CD8-positive, alpha-beta T cell (primary cell): ENCODE measurements at regions of chr11 and their contacts with region 1.

Region 1: DNA sequence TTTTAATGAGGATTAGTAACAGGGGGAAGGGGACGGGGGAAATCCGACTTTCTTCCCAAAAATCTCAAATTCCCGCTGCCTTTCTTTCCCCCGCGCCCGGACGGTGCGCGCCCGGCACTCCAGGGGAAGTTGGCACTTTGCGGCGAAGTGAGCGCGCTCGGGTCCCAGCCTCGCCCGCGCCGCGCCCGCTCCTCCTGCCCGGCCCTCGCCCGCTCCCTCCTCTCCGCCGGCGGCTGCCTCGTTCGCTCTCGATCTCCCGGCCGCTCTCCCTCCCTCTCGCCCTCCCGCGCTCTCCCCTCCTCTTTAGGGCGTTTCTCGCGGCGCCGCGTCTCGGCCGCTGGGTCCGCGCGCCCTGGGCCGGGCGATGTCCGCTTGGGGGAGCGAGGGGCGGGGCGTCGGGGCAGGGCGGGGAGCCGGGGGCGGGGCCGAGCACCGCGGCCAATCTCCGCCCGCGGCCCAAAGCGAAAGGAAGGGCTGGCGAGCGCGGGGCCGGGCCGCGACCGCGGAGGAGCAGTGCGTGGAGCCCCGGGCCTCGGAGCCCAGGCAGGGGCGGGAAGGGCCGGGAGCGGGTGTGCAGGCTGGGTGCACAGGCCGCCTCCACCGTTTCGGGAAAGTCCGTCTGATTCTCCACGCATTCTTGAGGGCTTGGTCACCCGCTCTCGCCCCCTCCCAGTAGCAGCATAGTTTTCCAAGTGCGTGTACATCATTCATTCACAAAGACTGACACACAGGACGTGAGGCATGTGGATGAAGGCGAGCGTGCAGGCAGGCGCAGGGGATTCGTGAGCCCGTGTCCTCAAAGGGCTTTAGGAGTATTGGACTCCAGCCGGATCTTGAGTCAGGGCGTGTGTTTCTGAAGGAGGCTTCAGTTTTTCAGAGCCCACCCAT is 65.1 kb downstream of the ETS1 start:
- DNase-seq: peak; percentile 80 to 96 (median 91)
- ATAC-seq: peak; percentile 62
- H3K4me3 ChIP-seq: peak overlapping the region; percentile 94 to 97
- H3K4me3 Mint-ChIP-seq: peak overlapping the region; percentile 98
- H3K27ac ChIP-seq: peak overlapping the region; percentile 86 to 91
- H3K27ac Mint-ChIP-seq: peak overlapping the region; percentile 98
- H3K4me1 ChIP-seq: peaks cover 44% of the 10 kb centered on the region
- H3K4me1 Mint-ChIP-seq: peaks cover 50% of the 10 kb centered on the region
- H3K27me3 ChIP-seq: no peaks in the 10 kb centered on the region
- H3K27me3 Mint-ChIP-seq: no peaks in the 10 kb centered on the region
- CTCF ChIP-seq: no peak

Region 2: DNA sequence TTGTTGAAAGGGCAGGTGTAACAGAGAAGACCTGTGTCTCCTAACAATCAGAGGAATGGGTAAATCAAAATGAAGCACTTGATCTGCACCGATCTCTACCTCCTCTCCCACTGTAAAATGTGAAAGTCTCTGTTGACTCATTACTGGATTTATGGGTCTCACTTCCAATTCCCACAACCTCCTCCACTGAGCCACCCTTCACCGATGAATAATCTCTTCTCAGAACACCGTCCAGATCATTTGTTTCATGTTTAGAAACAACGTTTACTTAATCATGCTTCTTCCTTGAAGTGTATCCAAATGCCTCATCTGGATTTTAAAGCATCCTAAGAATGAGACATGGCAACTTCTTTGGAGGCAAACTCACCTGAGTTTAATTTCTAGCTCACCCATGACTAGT is 578.5 kb before region 1 on chr11:
- CTCF ChIA-PET with region 1: no interaction called
- POLR2A ChIA-PET with region 1: no interaction called
- intact Hi-C with region 1: no loop called
- DNase-seq: no peak
- ATAC-seq: no peak
- H3K4me3 ChIP-seq: no peak overlapping the region
- H3K4me3 Mint-ChIP-seq: no peak overlapping the region
- H3K27ac ChIP-seq: no peak overlapping the region
- H3K27ac Mint-ChIP-seq: no peak overlapping the region
- H3K4me1 ChIP-seq: no peaks in the 10 kb centered on the region
- H3K4me1 Mint-ChIP-seq: no peaks in the 10 kb centered on the region
- H3K27me3 ChIP-seq: no peaks in the 10 kb centered on the region
- H3K27me3 Mint-ChIP-seq: peaks cover 8% of the 10 kb centered on the region
- CTCF ChIP-seq: no peak

Region 3: DNA sequence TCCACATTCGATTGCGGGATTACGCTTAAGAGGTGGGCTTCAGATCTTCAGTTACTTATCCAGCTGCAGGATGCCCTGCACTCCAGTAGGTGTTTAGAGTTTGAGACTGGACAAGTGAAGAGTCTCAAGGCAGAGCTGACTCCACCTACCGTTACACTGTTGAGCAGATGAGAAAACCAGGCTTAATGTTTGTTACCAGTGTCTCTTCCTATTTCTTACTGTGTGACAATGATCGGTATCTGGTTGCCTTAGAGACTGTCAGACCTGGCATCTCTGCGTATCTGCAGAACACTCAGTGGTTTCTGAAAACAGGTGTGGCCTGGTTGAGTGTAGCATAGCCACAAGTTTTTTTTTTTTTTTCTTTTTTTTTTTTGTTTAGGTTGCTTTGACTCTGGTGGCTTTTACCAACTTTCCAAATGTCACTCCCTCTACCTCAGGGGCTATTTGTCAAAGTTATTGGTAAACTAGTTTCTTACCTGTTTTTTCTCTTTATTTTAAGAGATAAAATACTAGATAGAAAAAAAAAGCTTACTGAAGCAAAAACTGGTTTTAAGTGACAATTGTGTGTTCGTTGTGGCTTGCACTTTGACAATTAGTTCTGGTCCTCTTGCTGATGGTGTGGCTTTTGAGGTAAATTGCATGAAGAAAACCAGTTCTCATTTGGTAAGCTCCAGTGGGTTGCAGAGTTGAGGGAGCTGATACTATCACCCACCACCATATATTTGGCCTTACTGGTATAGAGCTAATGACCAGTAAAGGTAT is 219.7 kb before region 1 on chr11:
- CTCF ChIA-PET with region 1: interaction called, 11 read pairs
- POLR2A ChIA-PET with region 1: interaction called, 71 read pairs
- intact Hi-C with region 1: loop called in 1 of 2 experiments (anchors 1 kb)
- DNase-seq: peak; percentile 49 to 97 (median 72)
- ATAC-seq: peak; percentile 85
- H3K4me3 ChIP-seq: peak overlapping the region; percentile 46 to 51
- H3K4me3 Mint-ChIP-seq: peak overlapping the region; percentile 88
- H3K27ac ChIP-seq: peak overlapping the region; percentile 87 to 89
- H3K27ac Mint-ChIP-seq: peak overlapping the region; percentile 99
- H3K4me1 ChIP-seq: peaks cover 88% of the 10 kb centered on the region
- H3K4me1 Mint-ChIP-seq: peaks cover 92% of the 10 kb centered on the region
- H3K27me3 ChIP-seq: no peaks in the 10 kb centered on the region
- H3K27me3 Mint-ChIP-seq: no peaks in the 10 kb centered on the region
- CTCF ChIP-seq: no peak

Region 4: DNA sequence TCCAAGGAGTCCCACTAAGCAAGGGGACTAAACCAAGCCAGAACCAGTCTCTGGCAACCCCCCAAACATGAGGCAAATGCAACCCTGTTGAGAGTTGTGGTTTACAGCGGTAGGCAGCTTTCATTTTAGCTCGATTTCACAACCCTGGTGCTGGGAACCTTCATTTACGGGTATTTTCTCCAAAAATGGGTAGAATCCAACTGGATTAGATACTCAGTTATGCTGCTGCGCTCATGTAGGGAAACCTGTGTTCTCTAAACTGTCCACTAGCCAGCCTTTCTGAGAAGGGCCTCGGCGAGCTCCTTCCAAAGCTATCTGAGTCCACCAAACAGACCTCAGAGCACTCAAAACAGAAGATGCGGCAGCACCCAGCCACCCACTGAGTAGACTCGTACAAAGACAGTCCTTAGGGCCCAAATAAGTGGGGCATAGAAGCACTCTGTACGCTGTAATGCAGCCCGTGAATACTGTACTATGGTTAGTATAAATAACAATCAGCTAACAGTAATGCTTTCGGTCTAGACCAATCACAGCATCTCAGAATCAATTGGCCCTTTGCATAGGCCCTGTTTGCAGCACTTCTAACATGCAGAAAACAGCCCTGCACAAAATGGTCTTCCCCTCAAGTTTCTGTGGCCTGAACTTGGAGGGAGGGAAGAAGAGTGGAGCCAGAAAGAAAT is 39.6 kb before region 1 on chr11:
- CTCF ChIA-PET with region 1: interaction called, 13 read pairs
- POLR2A ChIA-PET with region 1: interaction called, 185 read pairs
- intact Hi-C with region 1: loop called in 1 of 2 experiments (anchors 5 kb)
- DNase-seq: peak in 4 of 9 experiments; percentile 61 to 91 (median 82)
- ATAC-seq: peak; percentile 62
- H3K4me3 ChIP-seq: peak overlapping the region; percentile 26 to 40
- H3K4me3 Mint-ChIP-seq: peak overlapping the region; percentile 71
- H3K27ac ChIP-seq: peak overlapping the region; percentile 63 to 88
- H3K27ac Mint-ChIP-seq: peak overlapping the region; percentile 99
- H3K4me1 ChIP-seq: peaks cover 96% of the 10 kb centered on the region
- H3K4me1 Mint-ChIP-seq: peaks cover 96% of the 10 kb centered on the region
- H3K27me3 ChIP-seq: no peaks in the 10 kb centered on the region
- H3K27me3 Mint-ChIP-seq: no peaks in the 10 kb centered on the region
- CTCF ChIP-seq: no peak

Region 5: GRCh38 chr11:128544471-128545051 is 22.3 kb after region 1 on chr11:
- CTCF ChIA-PET with region 1: interaction called, 3 read pairs
- POLR2A ChIA-PET with region 1: interaction called, 9 read pairs
- intact Hi-C with region 1: loop called (anchors 1 to 2 kb)
- DNase-seq: peak in 3 of 9 experiments; percentile 26 to 51 (median 41)
- ATAC-seq: peak; percentile 68
- H3K4me3 ChIP-seq: peak overlapping the region in 1 of 2 experiments; percentile 4
- H3K4me3 Mint-ChIP-seq: peak overlapping the region; percentile 70
- H3K27ac ChIP-seq: no peak overlapping the region
- H3K27ac Mint-ChIP-seq: peak overlapping the region; percentile 87
- H3K4me1 ChIP-seq: peaks cover 50% of the 10 kb centered on the region
- H3K4me1 Mint-ChIP-seq: peaks cover 64% of the 10 kb centered on the region
- H3K27me3 ChIP-seq: no peaks in the 10 kb centered on the region
- H3K27me3 Mint-ChIP-seq: no peaks in the 10 kb centered on the region
- CTCF ChIP-seq: no peak

Region 6: DNA sequence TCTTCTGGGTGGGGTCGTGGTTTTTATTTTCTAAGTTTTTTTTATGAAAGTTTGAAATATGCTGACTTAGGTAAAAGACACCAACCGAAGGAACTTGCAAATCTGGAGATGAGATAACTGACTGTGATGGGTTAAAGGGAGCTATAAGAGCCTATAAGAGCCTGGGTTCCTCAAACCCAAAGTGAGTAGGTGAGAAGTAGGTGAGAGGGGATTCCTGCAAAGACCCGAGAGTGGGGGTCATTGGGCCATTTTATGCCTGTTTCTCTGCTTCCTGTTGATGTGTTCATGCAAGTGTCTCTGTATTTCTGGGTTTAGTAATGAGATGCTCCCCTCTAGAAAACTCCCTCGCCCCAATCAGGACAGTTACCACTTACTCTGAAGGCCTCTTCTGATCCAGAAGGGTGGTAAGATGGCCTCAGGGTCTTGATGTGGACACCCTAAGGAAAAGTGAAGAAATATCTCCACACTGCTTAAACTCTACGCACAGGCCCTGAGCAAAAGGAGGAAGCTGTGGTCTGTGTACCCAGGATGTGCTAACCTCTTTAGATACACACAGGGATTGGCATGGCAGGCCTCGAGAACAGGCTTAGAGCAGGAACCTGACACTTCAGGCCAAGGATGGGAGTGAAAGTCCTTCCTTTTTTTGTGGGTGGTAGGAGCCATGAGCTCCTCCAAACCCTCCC is 173.4 kb after region 1 on chr11:
- CTCF ChIA-PET with region 1: no interaction called
- POLR2A ChIA-PET with region 1: interaction called, 3 read pairs
- intact Hi-C with region 1: loop called in 1 of 2 experiments (anchors 5 kb)
- DNase-seq: peak in 6 of 9 experiments; percentile 29 to 78 (median 54)
- ATAC-seq: peak; percentile 47
- H3K4me3 ChIP-seq: peak overlapping the region; percentile 93 to 95
- H3K4me3 Mint-ChIP-seq: peak overlapping the region; percentile 98
- H3K27ac ChIP-seq: peak overlapping the region; percentile 80 to 89
- H3K27ac Mint-ChIP-seq: peak overlapping the region; percentile 98
- H3K4me1 ChIP-seq: peaks cover 54% of the 10 kb centered on the region
- H3K4me1 Mint-ChIP-seq: peaks cover 58% of the 10 kb centered on the region
- H3K27me3 ChIP-seq: no peaks in the 10 kb centered on the region
- H3K27me3 Mint-ChIP-seq: no peaks in the 10 kb centered on the region
- CTCF ChIP-seq: no peak